ENCODE measurements at regions of chr7 and their contacts with region 1.

Region 1: GRCh38 chr7:29488977-29489376 is 74.7 kb upstream of the PRR15 start:
- DNase-seq: peak; percentile 86
- H3K4me3 ChIP-seq: peak overlapping the region in 1 of 3 experiments; percentile 37
- H3K27ac ChIP-seq: peak overlapping the region; percentile 89
- H3K4me1 ChIP-seq: peaks cover 29% of the 10 kb centered on the region
- H3K27me3 ChIP-seq: no peaks in the 10 kb centered on the region
- CTCF ChIP-seq: no peak
- POLR2A ChIP-seq: peak; percentile 21

Region 2: GRCh38 chr7:28768628-28769027 is 720.3 kb before region 1 on chr7:
- CTCF ChIA-PET with region 1: no interaction called
- POLR2A ChIA-PET with region 1: no interaction called
- dilution Hi-C with region 1: no loop called
- intact Hi-C with region 1: no loop called
- DNase-seq: no peak
- H3K4me3 ChIP-seq: no peak overlapping the region
- H3K27ac ChIP-seq: no peak overlapping the region
- H3K4me1 ChIP-seq: no peaks in the 10 kb centered on the region
- H3K27me3 ChIP-seq: no peaks in the 10 kb centered on the region
- CTCF ChIP-seq: no peak
- POLR2A ChIP-seq: no peak

Region 3: GRCh38 chr7:29035044-29035740 is 453.8 kb before region 1 on chr7:
- CTCF ChIA-PET with region 1: no interaction called
- POLR2A ChIA-PET with region 1: no interaction called
- dilution Hi-C with region 1: no loop called
- intact Hi-C with region 1: loop called (anchors 5 kb)
- DNase-seq: peak; percentile 91
- H3K4me3 ChIP-seq: no peak overlapping the region
- H3K27ac ChIP-seq: peak overlapping the region; percentile 72
- H3K4me1 ChIP-seq: peaks cover 63% of the 10 kb centered on the region
- H3K27me3 ChIP-seq: no peaks in the 10 kb centered on the region
- CTCF ChIP-seq: no peak
- POLR2A ChIP-seq: peak; percentile 40

Region 4: GRCh38 chr7:29274146-29275017 is 214.6 kb before region 1 on chr7:
- CTCF ChIA-PET with region 1: no interaction called
- POLR2A ChIA-PET with region 1: no interaction called
- dilution Hi-C with region 1: no loop called
- intact Hi-C with region 1: loop called (anchors 10 kb)
- DNase-seq: no peak
- H3K4me3 ChIP-seq: no peak overlapping the region
- H3K27ac ChIP-seq: no peak overlapping the region
- H3K4me1 ChIP-seq: peaks cover 5% of the 10 kb centered on the region
- H3K27me3 ChIP-seq: no peaks in the 10 kb centered on the region
- CTCF ChIP-seq: no peak
- POLR2A ChIP-seq: no peak

Region 5: GRCh38 chr7:29723599-29723998 is 234.6 kb after region 1 on chr7:
- CTCF ChIA-PET with region 1: no interaction called
- POLR2A ChIA-PET with region 1: no interaction called
- dilution Hi-C with region 1: no loop called
- intact Hi-C with region 1: loop called (anchors 10 kb)
- DNase-seq: peak; percentile 32
- H3K4me3 ChIP-seq: no peak overlapping the region
- H3K27ac ChIP-seq: peak overlapping the region; percentile 34
- H3K4me1 ChIP-seq: peaks cover 17% of the 10 kb centered on the region
- H3K27me3 ChIP-seq: no peaks in the 10 kb centered on the region
- CTCF ChIP-seq: no peak
- POLR2A ChIP-seq: no peak

Measured in endothelial cell of umbilical vein (primary cell).